Naive thymus-derived CD4-positive, alpha-beta T cell (primary cell): ENCODE measurements at regions of chr13 and their contacts with region 1.

Region 1: DNA sequence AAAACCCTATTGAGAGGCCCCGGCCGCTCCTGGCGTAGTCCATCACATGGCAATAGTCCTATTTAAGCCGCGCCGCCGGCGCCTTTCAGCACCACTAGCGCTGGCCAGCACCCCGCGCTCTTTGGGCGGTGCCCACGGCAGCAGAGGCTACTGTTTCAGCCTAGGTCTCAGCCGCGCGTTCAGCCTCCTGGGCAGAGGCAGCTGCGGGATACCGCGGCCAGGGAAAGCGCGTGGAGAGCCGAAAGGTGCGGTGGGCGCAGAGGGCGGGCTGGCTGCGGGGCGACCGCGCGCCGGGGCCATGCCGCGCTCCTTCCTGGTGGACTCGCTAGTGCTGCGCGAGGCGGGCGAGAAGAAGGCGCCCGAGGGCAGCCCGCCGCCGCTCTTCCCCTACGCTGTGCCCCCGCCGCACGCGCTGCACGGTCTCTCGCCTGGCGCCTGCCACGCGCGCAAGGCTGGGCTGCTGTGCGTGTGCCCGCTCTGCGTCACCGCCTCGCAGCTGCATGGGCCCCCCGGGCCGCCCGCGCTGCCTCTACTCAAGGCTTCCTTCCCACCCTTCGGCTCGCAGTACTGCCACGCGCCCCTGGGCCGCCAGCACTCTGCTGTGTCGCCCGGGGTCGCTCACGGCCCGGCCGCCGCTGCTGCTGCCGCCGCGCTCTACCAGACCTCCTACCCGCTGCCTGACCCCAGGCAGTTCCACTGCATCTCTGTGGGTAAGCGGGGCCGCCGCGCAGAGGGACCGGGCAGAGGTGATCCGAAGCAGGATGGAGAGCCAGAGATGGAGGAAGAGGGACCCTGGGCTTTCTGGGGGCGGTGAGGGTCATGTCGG is at the start of gene GSX1:
- DNase-seq: peak in 7 of 9 donors; percentile 33 to 55 (median 41)
- ATAC-seq: peak; percentile 75
- H3K4me3 ChIP-seq: peak within 1 kb of the TSS; percentile 59
- H3K4me3 Mint-ChIP-seq: peak within 1 kb of the TSS; percentile 74 to 92 (median 87)
- H3K27ac ChIP-seq: no peak within 1 kb of the TSS
- H3K27ac Mint-ChIP-seq: peak within 1 kb of the TSS in 2 of 9 donors; percentile 48 to 58
- H3K4me1 ChIP-seq: peaks cover 17 to 18% of the 10 kb centered on the region in 2 donors
- H3K4me1 Mint-ChIP-seq: peaks cover 28 to 59% (median 44%) of the 10 kb centered on the region in 7 donors
- H3K27me3 ChIP-seq: peaks cover 10 to 29% of the 10 kb centered on the region in 2 donors
- H3K27me3 Mint-ChIP-seq: peaks cover 75 to 89% (median 83%) of the 10 kb centered on the region in 5 donors
- total RNA-seq, gene GSX1: not detected

Region 2: DNA sequence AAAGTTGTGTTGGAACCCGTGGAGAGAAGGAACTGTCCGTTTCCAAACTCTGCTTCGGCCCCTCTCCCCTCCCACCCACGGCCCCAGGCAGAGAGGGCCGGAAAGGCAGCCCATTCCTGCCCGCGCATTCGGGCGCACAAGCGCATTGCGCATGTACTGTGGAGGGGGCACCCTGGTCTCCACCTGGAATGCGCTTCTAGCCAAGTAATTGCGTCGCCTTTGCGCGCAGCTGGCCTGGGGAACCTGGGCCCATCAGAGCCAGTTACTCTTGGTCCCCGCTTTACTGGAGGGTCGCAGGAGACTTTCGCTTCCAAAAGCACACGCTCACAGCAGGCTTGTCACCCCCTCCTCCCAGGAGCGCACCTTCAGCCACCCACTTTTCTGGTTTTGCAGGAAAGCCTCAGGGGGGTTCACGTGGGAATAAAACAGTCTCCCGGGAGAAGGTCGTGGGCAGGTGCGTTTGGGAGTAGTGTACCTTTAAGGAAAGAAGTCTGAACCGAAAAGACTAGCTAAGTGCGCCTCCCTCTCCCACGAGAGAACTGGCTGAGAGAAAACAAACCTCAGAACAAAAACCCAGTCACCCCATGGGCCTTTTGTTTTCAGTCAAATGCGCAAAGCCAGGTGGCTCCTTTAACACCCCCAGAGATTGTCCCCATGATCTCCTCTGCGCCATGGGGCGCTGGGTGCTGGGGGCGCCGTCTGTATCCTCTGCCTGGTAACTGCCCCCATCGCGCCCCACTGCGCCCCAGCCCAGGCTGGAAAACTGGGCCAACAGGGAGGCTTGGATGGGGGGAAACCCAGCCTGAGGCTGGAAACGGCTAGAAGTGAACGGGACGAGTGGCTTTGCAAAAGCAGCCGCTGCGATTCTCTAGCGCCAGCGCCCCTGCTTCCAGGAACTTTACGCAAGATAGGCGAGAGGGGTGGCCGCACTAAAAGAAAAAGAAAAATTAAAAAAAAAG is 28.2 kb after region 1 on chr13:
- CTCF ChIA-PET with region 1: no interaction called
- POLR2A ChIA-PET with region 1: no interaction called
- intact Hi-C with region 1: loop called in 1 of 2 experiments (anchors 2 kb)
- DNase-seq: no peak
- ATAC-seq: no peak
- H3K4me3 ChIP-seq: no peak overlapping the region
- H3K4me3 Mint-ChIP-seq: no peak overlapping the region
- H3K27ac ChIP-seq: no peak overlapping the region
- H3K27ac Mint-ChIP-seq: no peak overlapping the region
- H3K4me1 ChIP-seq: no peaks in the 10 kb centered on the region
- H3K4me1 Mint-ChIP-seq: no peaks in the 10 kb centered on the region
- H3K27me3 ChIP-seq: peaks cover 0 to 5% of the 10 kb centered on the region in 2 donors
- H3K27me3 Mint-ChIP-seq: peaks cover 64 to 74% (median 70%) of the 10 kb centered on the region in 5 donors

Region 3: DNA sequence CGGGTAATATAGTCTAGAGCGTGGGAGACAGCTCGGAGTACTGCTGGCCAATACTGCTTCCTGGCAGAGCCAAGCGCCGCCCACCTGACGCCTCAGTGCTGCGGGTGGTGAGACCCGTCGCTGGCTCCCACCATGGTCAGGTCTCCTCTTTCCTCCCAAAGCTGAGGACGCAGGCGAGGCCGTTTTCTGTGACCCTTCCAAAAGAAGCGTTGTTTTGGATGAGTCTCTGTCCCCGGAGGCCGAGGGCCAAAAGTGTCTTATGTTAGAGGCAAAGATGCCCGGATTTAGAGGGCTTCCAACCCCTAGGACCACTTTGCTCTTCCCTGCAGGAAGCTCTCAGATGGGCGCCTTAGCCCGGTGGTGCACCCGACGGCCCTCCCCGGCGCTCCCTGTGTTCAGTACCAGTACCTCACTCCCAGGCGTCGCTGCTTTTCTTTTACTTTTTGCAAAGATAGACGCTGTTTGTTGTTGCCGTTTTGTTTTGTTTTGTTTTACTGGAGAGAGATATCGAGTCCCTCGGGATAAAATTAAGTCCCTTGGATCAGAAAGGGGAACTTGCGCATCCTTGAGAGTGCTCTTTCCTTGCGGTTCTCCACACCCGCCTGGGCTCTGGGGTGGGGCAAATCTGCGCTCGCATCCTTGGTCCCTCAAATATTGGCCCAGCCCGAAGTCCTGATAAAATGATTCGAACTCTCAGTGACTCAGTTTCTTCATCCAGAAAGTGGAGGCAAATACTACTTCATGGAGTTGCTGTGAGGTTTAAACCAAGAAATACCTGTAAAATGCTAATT is 134.2 kb after region 1 on chr13:
- CTCF ChIA-PET with region 1: no interaction called
- POLR2A ChIA-PET with region 1: no interaction called
- intact Hi-C with region 1: loop called in 1 of 2 experiments (anchors 2 kb)
- DNase-seq: no peak
- ATAC-seq: no peak
- H3K4me3 ChIP-seq: no peak overlapping the region
- H3K4me3 Mint-ChIP-seq: peak overlapping the region in 8 of 10 donors; percentile 9 to 58 (median 36)
- H3K27ac ChIP-seq: no peak overlapping the region
- H3K27ac Mint-ChIP-seq: peak overlapping the region in 1 of 9 donors; percentile 60
- H3K4me1 ChIP-seq: no peaks in the 10 kb centered on the region
- H3K4me1 Mint-ChIP-seq: peaks cover 6 to 48% (median 43%) of the 10 kb centered on the region in 7 donors
- H3K27me3 ChIP-seq: peaks cover 0 to 20% of the 10 kb centered on the region in 2 donors
- H3K27me3 Mint-ChIP-seq: peaks cover 86 to 94% (median 88%) of the 10 kb centered on the region in 5 donors

Region 4: GRCh38 chr13:27968316-27969081 is 175.9 kb after region 1 on chr13:
- CTCF ChIA-PET with region 1: no interaction called
- POLR2A ChIA-PET with region 1: no interaction called
- intact Hi-C with region 1: loop called in 1 of 2 experiments (anchors 5 kb)
- DNase-seq: no peak
- ATAC-seq: no peak
- H3K4me3 ChIP-seq: no peak overlapping the region
- H3K4me3 Mint-ChIP-seq: peak overlapping the region in 3 of 10 donors; percentile 16 to 73 (median 62)
- H3K27ac ChIP-seq: no peak overlapping the region
- H3K27ac Mint-ChIP-seq: no peak overlapping the region
- H3K4me1 ChIP-seq: no peaks in the 10 kb centered on the region
- H3K4me1 Mint-ChIP-seq: peaks cover 6 to 30% (median 21%) of the 10 kb centered on the region in 7 donors
- H3K27me3 ChIP-seq: peaks cover 5 to 7% of the 10 kb centered on the region in 2 donors
- H3K27me3 Mint-ChIP-seq: peaks cover 67 to 87% (median 79%) of the 10 kb centered on the region in 5 donors